ENCODE measurements at regions of chr17 and their contacts with region 1.

Region 1: DNA sequence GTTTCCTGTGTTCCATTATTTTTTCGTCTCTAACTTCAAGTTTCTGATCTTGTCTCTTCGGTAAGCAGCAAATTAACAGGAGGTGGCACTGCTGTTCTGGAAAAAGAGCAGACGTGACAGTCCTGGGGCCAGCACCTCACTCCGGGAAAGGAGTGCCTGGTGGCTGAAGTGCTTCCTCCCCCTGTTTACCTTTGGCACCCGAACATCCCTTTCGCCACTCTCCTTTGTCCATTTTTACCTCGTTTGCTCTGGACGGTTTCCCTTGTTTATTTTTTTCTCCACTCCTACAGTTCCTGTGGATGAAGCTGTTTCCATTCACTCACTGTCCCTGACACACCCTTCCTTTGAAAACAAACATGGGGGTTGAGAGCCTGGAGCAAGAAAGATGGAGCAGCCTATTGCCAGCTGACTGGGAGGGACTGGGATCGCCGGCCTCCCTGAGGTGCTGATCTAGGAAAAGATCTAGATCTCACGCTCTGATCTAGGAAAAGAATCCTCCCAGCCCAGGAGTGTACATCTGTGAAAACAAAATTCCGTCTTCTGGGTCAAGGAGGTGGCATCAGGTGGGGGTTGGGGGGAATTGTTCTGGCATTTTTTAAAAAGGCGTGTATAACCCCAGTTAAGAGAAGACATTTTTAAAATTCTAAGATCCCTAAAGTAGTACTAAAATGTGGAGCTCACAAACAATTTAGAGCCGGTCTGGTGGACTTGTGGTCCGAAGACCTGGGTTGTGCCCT is 12.7 kb downstream of the SAP30BP start:
- DNase-seq: peak; percentile 83 to 89
- ATAC-seq: peak; percentile 77 to 80
- H3K4me3 ChIP-seq: no peak overlapping the region
- H3K27ac ChIP-seq: peak overlapping the region; percentile 75 to 93
- H3K4me1 ChIP-seq: peaks cover 76% of the 10 kb centered on the region
- CTCF ChIP-seq: peak; percentile 96
- EP300 ChIP-seq: peak in 1 of 2 experiments; percentile 58; a peak in 2 of 5 replicates
- POLR2A ChIP-seq: no peak
- RAD21 ChIP-seq: peak; percentile 94 to 98

Region 2: DNA sequence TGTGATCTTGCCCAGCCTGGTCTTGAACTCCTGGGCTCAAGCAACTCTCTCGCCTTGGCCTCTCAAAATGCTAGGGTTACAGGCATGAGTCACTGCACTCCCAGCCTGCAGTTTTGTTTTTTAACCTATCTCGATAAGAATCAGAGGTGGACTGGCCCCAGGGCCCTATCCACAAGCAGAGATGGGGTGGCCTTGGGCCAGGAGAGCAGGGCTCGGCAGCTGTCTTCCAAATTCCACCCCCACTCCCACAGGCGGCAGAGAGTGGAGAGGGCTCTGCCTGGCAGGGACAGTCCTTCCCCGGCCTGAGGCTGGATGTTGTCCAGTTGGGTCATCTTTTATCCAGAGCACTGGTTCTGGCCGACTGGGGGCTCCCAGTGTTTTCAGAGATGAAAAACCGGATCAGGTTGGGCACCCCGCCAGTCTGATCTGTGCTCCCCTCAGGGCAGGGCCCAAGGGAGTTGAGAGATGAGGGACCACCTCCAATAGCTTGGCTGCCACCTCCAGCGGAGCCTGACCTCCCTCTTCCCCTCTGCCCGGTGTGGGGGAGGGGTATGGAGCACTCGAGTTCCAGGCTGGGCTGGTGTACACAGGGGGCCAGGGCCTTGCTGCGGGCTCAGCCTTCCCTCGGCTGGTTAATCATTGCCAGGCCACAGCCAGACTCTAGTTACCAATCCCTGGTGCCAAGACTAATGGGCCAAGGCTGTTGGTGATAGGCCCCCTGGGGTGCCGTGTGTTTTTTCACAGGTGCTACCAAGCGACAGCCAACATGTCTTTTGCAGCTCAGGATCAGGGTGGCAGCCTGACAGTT is 122.6 kb before region 1 on chr17:
- CTCF ChIA-PET with region 1: no interaction called
- POLR2A ChIA-PET with region 1: no interaction called
- DNase-seq: peak; percentile 94 to 97
- ATAC-seq: peak; percentile 79 to 86
- H3K4me3 ChIP-seq: peak overlapping the region; percentile 10; the same call in 1 of the 3 replicates
- H3K27ac ChIP-seq: peak overlapping the region; percentile 93 to 95
- H3K4me1 ChIP-seq: peaks cover 81% of the 10 kb centered on the region
- CTCF ChIP-seq: 0 out of 3 replicates have a peak, but pooled peaks have one; percentile 8
- EP300 ChIP-seq: peak in 1 of 2 experiments; percentile 58; a peak in 2 of 5 replicates
- POLR2A ChIP-seq: no peak
- RAD21 ChIP-seq: peak; percentile 12 to 39; a peak in 4 of 5 replicates

Region 3: DNA sequence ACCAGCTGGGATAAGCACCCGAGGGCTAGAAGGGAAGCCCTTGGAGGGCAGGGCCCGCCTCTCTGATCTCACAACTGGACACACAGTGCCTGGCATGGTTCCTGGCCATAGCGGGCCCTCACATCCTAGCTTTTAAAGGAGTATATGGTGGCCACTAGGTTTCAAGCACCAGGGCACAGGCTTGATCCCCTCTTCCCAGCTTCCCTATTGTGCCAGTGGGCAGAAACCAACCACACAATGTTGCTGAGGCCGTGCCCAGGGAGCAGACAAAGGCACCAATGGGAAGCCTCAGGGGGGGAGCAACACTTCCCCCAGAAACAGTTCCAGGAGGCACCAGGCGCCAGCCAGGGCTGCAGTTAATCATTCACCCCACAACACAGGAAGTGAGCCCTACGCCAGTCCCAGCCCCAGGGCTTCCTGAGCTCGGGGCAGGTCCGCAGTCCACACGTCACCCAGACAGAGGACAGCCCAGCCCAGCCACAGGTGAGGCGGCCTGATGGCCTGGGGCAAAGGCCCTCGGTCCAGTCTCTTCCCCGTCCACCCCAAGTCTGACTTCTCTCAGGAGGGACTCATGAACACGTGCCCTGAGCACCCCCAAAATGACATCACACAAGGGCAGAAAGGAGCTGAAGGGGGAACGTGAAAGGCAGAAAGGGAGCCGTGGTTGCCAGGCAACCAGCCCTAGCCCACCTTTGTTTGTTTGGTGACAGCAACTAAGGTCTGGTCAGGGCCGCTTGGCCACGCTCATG is 33.8 kb before region 1 on chr17:
- CTCF ChIA-PET with region 1: interaction called, 19 read pairs
- POLR2A ChIA-PET with region 1: no interaction called
- DNase-seq: peak; percentile 94 to 99
- ATAC-seq: peak; percentile 90 to 96
- H3K4me3 ChIP-seq: peak overlapping the region; percentile 25; the same call in 1 of the 3 replicates
- H3K27ac ChIP-seq: peak overlapping the region; percentile 91 to 92
- H3K4me1 ChIP-seq: peaks cover 31% of the 10 kb centered on the region
- CTCF ChIP-seq: no peak
- EP300 ChIP-seq: no peak
- POLR2A ChIP-seq: peak; percentile 38; the same call in 1 of the 2 replicates
- RAD21 ChIP-seq: no peak; a peak in 1 of 5 replicates

Region 4: DNA sequence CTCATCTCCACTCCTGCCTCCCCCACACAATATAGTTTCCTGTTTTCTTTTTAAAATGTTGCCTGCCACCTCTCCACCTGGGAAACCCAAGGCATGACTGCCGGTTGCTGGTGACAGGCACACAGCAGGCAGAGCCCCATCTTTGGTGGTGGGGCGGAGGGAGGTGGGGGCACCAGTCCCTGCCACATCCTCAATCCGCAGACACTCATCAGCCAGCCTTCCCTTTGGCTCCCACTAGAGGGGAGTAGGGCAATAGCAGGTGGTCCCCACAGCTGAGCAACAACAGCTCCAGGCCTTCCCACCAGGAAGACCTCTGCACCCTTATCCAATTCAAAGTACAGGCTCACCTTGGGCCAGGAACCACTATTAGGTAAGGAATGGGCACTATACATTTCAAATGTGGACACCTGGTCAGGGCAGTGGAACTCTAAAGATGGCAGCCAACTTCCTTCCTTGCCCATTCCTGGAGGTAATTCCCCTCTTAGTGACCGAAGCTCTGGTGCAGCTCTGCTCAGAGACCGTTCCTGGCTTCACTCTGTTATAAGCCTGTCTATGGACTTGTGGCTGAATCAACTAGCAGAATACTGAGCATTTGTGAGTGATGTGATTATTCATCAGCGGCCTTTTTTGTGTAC is 26.8 kb before region 1 on chr17:
- CTCF ChIA-PET with region 1: interaction called, 56 read pairs
- POLR2A ChIA-PET with region 1: no interaction called
- DNase-seq: peak; percentile 58 to 60
- ATAC-seq: peak; percentile 86 to 93
- H3K4me3 ChIP-seq: no peak overlapping the region
- H3K27ac ChIP-seq: 0 out of 6 replicates have a peak overlapping the region, but pooled peaks of 1 of the 2 experiments have one; percentile 11
- H3K4me1 ChIP-seq: no peaks in the 10 kb centered on the region
- CTCF ChIP-seq: peak; percentile 70
- EP300 ChIP-seq: no peak
- POLR2A ChIP-seq: no peak
- RAD21 ChIP-seq: peak; percentile 55 to 79; a peak in 4 of 5 replicates

Region 5: GRCh38 chr17:75661531-75661930 is 18.3 kb before region 1 on chr17:
- CTCF ChIA-PET with region 1: interaction called, 56 read pairs
- POLR2A ChIA-PET with region 1: no interaction called
- DNase-seq: no peak
- ATAC-seq: no peak
- H3K4me3 ChIP-seq: no peak overlapping the region
- H3K27ac ChIP-seq: no peak overlapping the region
- H3K4me1 ChIP-seq: peaks cover 7% of the 10 kb centered on the region
- CTCF ChIP-seq: no peak
- EP300 ChIP-seq: no peak
- POLR2A ChIP-seq: no peak
- RAD21 ChIP-seq: no peak

Region 6: DNA sequence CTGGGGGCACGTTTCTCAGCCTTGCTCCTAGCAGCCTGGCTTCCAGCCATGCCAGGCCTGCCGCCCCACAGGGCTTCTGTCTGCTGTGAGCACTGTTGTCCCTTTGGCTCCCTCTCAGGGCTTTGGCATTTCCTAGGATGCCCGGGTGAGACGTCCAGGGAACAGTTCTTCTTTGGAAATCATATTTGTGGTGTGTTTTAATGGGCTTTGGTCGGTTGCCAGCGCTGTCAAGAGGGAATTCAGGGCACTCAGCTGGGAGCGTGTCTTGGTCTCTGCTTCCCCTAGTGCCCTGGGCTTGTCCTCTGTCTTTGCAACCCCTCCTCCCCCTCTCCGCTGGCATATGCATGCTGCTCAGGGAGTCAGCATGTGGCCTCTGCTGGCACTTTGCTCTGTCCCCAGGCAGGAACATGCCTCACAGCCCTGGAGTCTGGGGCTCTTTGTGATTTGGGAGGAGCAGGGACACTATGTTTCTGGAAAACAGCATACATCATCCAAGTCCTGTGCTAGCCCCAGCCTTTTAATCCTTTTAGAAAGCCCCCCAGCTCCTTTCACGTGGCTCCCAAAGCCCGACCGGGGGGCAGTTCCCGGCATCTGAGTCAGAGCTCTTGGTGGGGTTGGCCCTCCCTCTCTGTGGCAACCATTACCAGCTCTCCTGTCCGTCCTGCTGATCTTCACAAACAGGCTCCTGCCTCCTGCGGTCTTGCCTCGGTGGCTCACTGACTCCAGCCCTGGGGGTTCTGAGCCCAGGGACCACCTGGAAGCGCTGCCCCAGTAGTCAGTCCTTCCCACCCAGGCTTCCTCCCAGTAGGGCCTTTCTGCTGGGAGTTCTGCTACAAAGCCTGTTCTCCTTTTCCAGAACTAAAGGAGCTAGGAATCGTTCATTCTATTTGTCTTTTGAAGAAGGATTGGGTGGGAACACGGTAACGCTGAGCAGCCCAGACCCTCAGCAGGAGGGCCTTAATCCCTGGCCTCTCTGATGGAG is 13.9 kb after region 1 on chr17:
- CTCF ChIA-PET with region 1: interaction called, 36 read pairs
- POLR2A ChIA-PET with region 1: interaction called, 4 read pairs
- DNase-seq: peak; percentile 65 to 85
- ATAC-seq: peak; percentile 70 to 75
- H3K4me3 ChIP-seq: no peak overlapping the region; the same call in 2 of the 3 replicates
- H3K27ac ChIP-seq: peak overlapping the region; percentile 93
- H3K4me1 ChIP-seq: peaks cover 100% of the 10 kb centered on the region
- CTCF ChIP-seq: no peak; the same call in 2 of the 3 replicates
- EP300 ChIP-seq: peak in 1 of 2 experiments; percentile 40; a peak in 2 of 5 replicates
- POLR2A ChIP-seq: no peak
- RAD21 ChIP-seq: peak; percentile 36 to 54; a peak in 3 of 5 replicates